Activated naive CD4-positive, alpha-beta T cell treated with anti-CD3 and anti-CD28 coated beads for 36 hours (primary cell): ENCODE measurements at regions of chr1 and their contacts with region 1.

Region 1: DNA sequence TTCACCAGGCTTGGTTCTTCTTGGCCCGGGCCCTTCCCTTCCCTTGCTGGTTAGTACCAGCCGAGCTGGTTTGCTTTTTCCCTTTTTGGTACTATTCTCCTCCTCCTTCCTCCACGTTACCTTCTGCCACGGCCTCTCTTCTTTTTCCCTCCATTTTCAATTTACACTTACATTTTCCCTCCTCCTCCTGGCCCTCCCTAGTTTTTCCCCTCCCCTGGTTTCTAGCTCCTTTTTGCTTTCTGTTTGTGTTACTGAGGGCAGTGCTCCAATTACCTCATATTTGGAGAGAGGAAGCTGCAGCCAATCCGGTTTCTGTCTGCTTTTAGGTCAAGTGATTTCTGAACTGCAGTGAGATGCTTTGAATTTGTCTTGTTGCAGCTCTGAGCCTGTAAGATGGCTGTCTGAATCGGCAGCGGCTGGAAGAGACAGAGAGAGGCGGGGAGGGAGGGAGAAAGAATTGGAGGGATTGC is 63.7 kb downstream of the MACF1 start:
- DNase-seq: peak; percentile 30
- H3K4me3 Mint-ChIP-seq: peak overlapping the region; percentile 69
- H3K27ac Mint-ChIP-seq: peak overlapping the region; percentile 54
- H3K4me1 Mint-ChIP-seq: peaks cover 75% of the 10 kb centered on the region
- H3K27me3 Mint-ChIP-seq: no peaks in the 10 kb centered on the region

Region 2: DNA sequence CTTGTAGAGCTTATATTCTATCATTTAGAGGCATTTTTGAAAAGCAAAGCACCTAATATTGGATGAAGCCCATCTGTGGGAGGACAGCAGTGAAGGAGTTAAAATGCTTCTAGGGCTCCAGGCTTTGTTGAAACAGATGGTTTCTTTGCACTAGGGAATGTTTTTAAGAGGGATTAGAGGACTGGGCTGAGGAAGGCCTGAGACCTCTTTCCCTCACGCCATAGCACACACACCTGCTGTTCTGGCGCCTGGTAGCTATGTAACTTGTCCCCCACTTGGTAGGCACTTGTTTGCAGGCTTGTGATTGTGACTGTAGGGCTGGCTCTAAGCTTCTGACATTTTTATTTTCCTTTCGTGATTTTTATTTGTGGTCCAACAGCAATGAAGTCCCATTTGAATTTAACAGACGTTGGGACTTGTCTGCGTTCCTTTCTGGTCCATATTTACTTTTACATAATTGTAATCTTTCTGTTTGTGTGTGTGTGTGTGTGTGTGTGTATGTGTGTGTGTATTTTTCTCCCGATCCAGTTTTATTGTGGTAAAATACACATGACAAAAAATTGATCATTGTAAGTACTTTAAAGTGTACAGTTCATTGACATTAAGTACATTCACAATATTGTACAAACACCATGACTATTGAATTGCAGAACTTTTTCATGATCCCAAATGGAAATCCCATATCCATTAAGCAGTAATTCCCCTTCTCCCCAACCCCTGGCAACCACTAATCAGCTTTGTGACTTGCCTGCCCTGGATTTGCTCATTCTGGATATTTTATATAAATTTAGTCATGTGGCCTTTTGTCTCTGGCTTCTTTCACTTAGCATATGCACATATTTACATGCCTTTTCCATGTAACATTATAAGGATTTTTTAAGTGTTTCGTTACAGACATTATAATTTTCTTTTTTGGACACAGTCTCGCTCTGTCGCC is 97.1 kb before region 1 on chr1:
- CTCF ChIA-PET with region 1: no interaction called
- intact Hi-C with region 1: no loop called
- DNase-seq: no peak
- H3K4me3 Mint-ChIP-seq: no peak overlapping the region
- H3K27ac Mint-ChIP-seq: no peak overlapping the region
- H3K4me1 Mint-ChIP-seq: no peaks in the 10 kb centered on the region
- H3K27me3 Mint-ChIP-seq: no peaks in the 10 kb centered on the region

Region 3: GRCh38 chr1:39398278-39399021 is 130.3 kb after region 1 on chr1:
- CTCF ChIA-PET with region 1: no interaction called
- intact Hi-C with region 1: loop called (anchors 5 kb)
- DNase-seq: peak; percentile 58
- H3K4me3 Mint-ChIP-seq: no peak overlapping the region
- H3K27ac Mint-ChIP-seq: peak overlapping the region; percentile 68
- H3K4me1 Mint-ChIP-seq: peaks cover 63% of the 10 kb centered on the region
- H3K27me3 Mint-ChIP-seq: no peaks in the 10 kb centered on the region

Region 4: GRCh38 chr1:39538588-39539465 is 270.7 kb after region 1 on chr1:
- CTCF ChIA-PET with region 1: interaction called, 4 read pairs
- intact Hi-C with region 1: loop called (anchors 10 kb)
- DNase-seq: peak; percentile 63
- H3K4me3 Mint-ChIP-seq: no peak overlapping the region
- H3K27ac Mint-ChIP-seq: no peak overlapping the region
- H3K4me1 Mint-ChIP-seq: no peaks in the 10 kb centered on the region
- H3K27me3 Mint-ChIP-seq: no peaks in the 10 kb centered on the region